Activated CD4-positive, alpha-beta memory T cell treated with anti-CD3 and anti-CD28 coated beads for 36 hours (primary cell): ENCODE measurements at regions of chr6 and their contacts with region 1.

Region 1: DNA sequence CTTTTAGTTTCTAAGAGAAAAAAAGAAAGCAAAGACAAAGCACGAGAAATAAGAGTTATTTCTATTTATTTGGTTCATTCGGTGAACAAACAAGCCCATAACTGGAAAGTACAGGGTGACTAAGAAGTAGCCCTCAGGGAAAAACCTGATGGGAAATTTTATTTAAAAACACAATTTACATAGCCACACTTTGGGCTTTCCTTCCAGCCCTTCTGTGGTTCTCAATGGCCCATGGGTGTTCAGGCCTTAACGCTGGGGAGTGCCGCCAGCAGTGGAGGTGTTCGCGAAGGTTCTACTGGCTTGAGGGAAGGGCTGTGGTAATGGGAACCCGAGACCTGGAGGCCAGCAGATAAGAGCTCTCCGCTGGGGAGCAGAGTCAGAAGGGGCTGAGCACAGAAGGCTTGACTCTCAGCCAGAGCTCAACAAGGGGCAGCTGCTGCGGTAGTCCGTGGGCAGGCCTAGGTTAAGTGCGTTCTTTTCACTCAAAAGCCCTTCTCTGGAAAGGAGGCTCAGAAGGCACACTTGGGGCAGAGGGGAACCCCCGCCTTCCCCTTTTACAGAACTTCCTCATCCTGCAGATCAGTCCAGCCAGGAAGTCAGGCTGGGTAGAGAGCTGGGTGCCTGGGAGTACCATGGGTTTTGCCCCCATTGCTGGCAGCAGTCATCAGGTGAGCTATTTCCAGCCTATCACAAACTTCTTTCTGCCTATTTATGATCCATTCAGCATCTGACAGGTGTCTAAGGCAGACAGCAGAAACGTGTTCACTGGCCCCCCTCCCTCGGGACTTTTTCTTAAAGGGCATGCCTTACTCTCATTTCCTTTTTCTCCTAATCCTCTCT is 8.8 kb upstream of the CD83 start:
- DNase-seq: peak; percentile 56
- H3K4me3 Mint-ChIP-seq: peak overlapping the region; percentile 40
- H3K27ac Mint-ChIP-seq: peak overlapping the region; percentile 74
- H3K4me1 Mint-ChIP-seq: peaks cover 32% of the 10 kb centered on the region
- H3K27me3 Mint-ChIP-seq: peaks cover 8% of the 10 kb centered on the region

Region 2: DNA sequence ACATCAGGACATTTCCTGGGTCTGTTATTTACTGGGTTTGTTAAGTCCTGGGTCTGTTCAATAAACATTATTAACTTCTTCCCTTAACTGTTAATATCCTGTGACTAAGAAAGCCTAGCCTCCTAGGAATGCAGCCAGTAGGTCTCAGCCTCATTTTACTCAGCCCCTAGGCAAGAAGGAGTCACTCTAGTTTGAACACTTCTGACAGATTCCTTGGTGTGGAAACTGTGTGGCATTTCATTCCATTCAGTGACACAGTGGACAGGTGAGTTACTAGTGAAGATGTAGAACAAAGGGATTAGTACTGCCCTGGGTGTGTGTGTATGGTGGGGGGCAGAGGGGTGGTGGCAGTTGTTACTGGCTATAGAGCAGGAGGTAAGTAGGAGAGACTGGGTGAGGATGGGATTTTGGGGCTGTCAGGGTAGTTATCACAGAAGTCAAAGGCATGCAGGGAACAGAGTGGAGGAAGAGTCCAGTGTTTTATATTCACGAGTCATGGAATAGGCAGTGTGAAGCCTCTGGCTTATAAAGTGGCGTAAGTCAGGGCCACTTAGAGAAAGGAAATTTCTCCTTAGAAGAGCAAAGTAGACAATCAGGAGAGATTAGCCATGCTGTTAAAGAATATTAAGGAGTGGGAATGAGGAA is 155.6 kb before region 1 on chr6:
- CTCF ChIA-PET with region 1: no interaction called
- POLR2A ChIA-PET with region 1: no interaction called
- intact Hi-C with region 1: no loop called
- DNase-seq: no peak
- H3K4me3 Mint-ChIP-seq: no peak overlapping the region
- H3K27ac Mint-ChIP-seq: no peak overlapping the region
- H3K4me1 Mint-ChIP-seq: no peaks in the 10 kb centered on the region
- H3K27me3 Mint-ChIP-seq: peaks cover 16% of the 10 kb centered on the region

Region 3: GRCh38 chr6:14055541-14055940 is 53.2 kb before region 1 on chr6:
- CTCF ChIA-PET with region 1: no interaction called
- POLR2A ChIA-PET with region 1: no interaction called
- intact Hi-C with region 1: no loop called
- DNase-seq: no peak
- H3K4me3 Mint-ChIP-seq: no peak overlapping the region
- H3K27ac Mint-ChIP-seq: no peak overlapping the region
- H3K4me1 Mint-ChIP-seq: no peaks in the 10 kb centered on the region
- H3K27me3 Mint-ChIP-seq: peaks cover 10% of the 10 kb centered on the region

Region 4: DNA sequence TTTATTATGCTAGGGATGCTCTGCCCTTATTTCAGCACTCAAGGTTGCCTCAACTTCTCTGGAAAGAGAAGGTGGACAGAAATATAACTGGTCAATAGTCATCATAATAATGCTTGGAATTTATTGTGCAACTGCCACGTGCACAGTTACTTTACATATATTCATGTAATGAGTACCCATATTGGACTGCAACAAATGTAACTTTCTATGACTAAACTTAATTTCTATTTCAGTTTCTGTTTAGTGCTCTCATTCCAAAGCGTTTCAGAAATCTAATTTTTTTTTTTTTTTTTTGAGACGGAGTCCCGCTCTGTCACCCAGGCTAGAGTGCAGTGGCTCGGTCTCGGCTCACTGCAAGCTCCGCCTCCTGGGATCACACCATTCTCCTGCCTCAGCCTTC is 19.6 kb before region 1 on chr6:
- CTCF ChIA-PET with region 1: no interaction called
- POLR2A ChIA-PET with region 1: no interaction called
- intact Hi-C with region 1: loop called (anchors 2 kb)
- DNase-seq: no peak
- H3K4me3 Mint-ChIP-seq: no peak overlapping the region
- H3K27ac Mint-ChIP-seq: no peak overlapping the region
- H3K4me1 Mint-ChIP-seq: peaks cover 28% of the 10 kb centered on the region
- H3K27me3 Mint-ChIP-seq: peaks cover 12% of the 10 kb centered on the region